ENCODE measurements at regions of chr17 and their contacts with region 1.

Region 1: GRCh38 chr17:35540589-35541404 is 3.3 kb upstream of the SLFN12L start:
- DNase-seq: peak in 1 of 6 donors; percentile 30
- ATAC-seq: peak in 3 of 4 donors; percentile 28 to 74 (median 64)
- H3K4me3 ChIP-seq: peak overlapping the region in 1 of 4 donors; percentile 18
- H3K27ac ChIP-seq: peak overlapping the region in 2 of 4 donors; percentile 42 to 59
- H3K4me1 ChIP-seq: no peaks in the 10 kb centered on the region
- H3K27me3 ChIP-seq: no peaks in the 10 kb centered on the region
- CTCF ChIP-seq: no peak

Region 2: DNA sequence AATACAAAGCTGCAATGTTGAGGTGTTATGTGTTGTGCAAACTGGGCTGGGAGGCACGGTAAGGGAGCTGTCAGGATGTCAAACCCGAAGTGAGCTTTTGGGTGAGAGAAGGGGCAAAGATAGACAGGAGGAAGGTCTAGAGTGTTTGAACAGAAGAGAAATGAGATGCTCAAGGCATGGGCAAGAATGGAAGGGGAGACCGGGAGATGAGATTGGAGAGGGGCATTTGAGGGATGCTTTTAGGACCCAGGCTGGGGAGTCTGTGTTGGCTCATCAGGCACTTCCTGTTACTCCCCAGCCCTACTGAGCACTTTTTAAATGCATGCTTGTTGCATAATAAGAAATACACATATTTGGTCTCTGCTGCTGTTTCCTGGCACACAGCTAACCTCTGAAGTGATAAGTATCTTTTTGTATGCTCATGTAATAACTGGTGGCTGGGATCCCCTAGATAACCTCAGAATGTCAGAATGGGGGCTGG is 379.5 kb before region 1 on chr17:
- intact Hi-C with region 1: loop called in 1 of 3 experiments (anchors 10 kb)
- DNase-seq: no peak
- ATAC-seq: no peak
- H3K4me3 ChIP-seq: no peak overlapping the region
- H3K27ac ChIP-seq: no peak overlapping the region
- H3K4me1 ChIP-seq: no peaks in the 10 kb centered on the region
- H3K27me3 ChIP-seq: no peaks in the 10 kb centered on the region
- CTCF ChIP-seq: no peak

Region 3: GRCh38 chr17:35170968-35171771 is 369.6 kb before region 1 on chr17:
- intact Hi-C with region 1: loop called (anchors 10 kb)
- DNase-seq: peak in 1 of 6 donors; percentile 13
- ATAC-seq: peak in 3 of 4 donors; percentile 36 to 58 (median 52)
- H3K4me3 ChIP-seq: no peak overlapping the region
- H3K27ac ChIP-seq: no peak overlapping the region
- H3K4me1 ChIP-seq: no peaks in the 10 kb centered on the region
- H3K27me3 ChIP-seq: no peaks in the 10 kb centered on the region
- CTCF ChIP-seq: peak in 2 of 4 donors; percentile 18 to 22

Region 4: DNA sequence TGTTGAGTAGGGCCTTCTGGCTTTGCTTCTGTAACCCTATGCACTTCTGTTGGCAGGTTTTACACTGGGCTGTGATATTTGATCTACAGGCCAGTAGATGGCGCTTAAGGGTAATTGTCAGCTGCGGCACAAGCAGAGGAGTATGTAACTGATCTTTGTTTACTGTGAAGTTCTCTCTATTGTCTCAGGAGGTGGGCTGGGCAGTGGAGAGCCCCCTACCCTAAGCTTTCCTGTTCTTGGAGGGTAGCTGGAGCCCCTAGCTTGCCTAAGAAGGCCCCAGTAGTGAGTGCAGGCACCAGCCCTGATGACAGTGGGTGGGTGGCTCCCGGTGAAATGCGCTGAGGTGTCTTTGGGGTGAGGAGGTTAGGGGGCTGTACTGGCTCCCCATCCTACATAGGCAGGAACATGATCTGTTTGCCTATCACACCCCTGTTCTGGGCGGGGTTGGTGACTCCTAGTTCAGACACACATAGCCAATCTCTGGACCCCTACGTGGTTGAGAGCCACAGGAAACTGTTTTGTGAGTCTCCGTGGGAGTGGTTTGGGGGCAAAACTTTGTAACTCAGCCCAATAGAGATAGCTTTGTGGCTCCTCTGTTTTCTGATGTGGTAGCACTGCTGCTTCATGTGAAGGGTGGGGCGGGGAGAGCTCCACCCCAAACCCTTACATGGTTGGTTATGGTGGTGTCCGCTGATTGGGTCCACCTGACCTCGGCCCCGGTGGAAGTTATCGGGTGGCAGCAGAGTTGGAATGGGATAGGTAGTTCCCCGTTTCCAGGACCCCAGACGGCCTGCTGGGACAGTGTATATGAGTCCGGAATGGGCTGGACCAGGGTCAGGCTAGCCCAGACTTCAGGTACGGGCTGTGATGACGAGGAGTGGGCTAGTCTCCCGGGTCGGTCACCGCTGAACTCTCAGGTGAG is 227.7 kb before region 1 on chr17:
- intact Hi-C with region 1: loop called in 1 of 3 experiments (anchors 5 kb)
- DNase-seq: peak in 4 of 6 donors; percentile 14 to 47 (median 38)
- ATAC-seq: peak; percentile 87 to 95 (median 94)
- H3K4me3 ChIP-seq: peak overlapping the region in 1 of 4 donors; percentile 22
- H3K27ac ChIP-seq: no peak overlapping the region
- H3K4me1 ChIP-seq: peaks cover 0 to 3% (median 0%) of the 10 kb centered on the region in 3 donors
- H3K27me3 ChIP-seq: no peaks in the 10 kb centered on the region
- CTCF ChIP-seq: peak; percentile 54 to 69 (median 66)

Region 5: GRCh38 chr17:35510052-35510451 is 30.7 kb before region 1 on chr17:
- intact Hi-C with region 1: no loop called
- DNase-seq: no peak
- ATAC-seq: no peak
- H3K4me3 ChIP-seq: no peak overlapping the region
- H3K27ac ChIP-seq: no peak overlapping the region
- H3K4me1 ChIP-seq: no peaks in the 10 kb centered on the region
- H3K27me3 ChIP-seq: peaks cover 0 to 5% (median 2%) of the 10 kb centered on the region in 4 donors
- CTCF ChIP-seq: no peak

Region 6: GRCh38 chr17:35747540-35748017 is 206.8 kb after region 1 on chr17:
- intact Hi-C with region 1: loop called in 1 of 3 experiments (anchors 5 kb)
- DNase-seq: peak; percentile 51 to 87 (median 80)
- ATAC-seq: peak; percentile 81 to 94 (median 90)
- H3K4me3 ChIP-seq: no peak overlapping the region
- H3K27ac ChIP-seq: no peak overlapping the region
- H3K4me1 ChIP-seq: peaks cover 0 to 4% (median 0%) of the 10 kb centered on the region in 3 donors
- H3K27me3 ChIP-seq: peaks cover 0 to 8% (median 0%) of the 10 kb centered on the region in 4 donors
- CTCF ChIP-seq: peak; percentile 76 to 90 (median 85)

Measured in pancreas (tissue), 10 donors.